ENCODE measurements at regions of chr14 and their contacts with region 1.

Region 1: GRCh38 chr14:69153131-69153872 is 383 bp upstream of the DCAF5 start:
- DNase-seq: peak; percentile 76 to 96 (median 91)
- ATAC-seq: peak; percentile 94
- H3K4me3 ChIP-seq: peak overlapping the region; percentile 83
- H3K4me3 Mint-ChIP-seq: peak overlapping the region; percentile 89 to 100 (median 97)
- H3K27ac ChIP-seq: peak overlapping the region; percentile 90
- H3K27ac Mint-ChIP-seq: peak overlapping the region; percentile 84 to 98 (median 93)
- H3K4me1 ChIP-seq: peaks cover 11 to 12% of the 10 kb centered on the region in 2 donors
- H3K4me1 Mint-ChIP-seq: peaks cover 30 to 37% (median 36%) of the 10 kb centered on the region in 7 donors
- H3K27me3 ChIP-seq: no peaks in the 10 kb centered on the region
- H3K27me3 Mint-ChIP-seq: peaks cover 0 to 36% (median 0%) of the 10 kb centered on the region in 5 donors

Region 2: DNA sequence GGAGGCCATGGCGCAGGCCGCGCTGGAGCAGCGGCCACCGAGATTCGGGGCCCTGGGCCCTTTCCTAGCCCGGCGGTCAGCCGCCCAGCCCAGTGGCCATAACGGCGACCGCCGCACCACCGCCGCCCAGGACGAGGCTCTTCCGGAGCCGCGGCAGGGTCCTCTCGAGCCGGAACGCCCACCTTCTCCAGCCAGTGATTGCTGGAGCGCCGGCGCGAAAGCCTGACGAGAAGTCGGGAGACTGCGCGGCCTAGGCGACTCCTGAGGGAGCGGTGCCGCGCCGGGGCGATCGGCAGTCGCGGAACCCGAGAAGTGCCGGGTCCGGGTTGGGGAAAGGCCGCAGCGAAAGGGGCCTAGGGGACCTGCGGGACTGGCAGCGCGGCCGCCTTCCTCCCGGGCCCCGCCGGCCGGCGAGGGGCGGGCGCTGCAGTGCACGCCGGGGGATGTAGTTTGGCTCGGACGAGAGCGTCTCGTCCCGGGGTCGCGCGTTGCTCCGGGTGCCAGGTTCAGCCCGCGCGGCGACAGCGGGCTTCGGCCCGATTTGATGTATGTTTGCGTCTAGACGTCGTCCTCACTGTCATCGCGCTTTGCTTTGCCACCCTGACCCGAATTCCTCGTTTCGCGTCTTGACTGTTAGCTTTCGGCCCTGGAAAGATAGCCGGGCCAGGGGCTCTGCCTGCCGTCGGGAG is 1478.7 kb before region 1 on chr14 and contains the start of gene VTI1B:
- CTCF ChIA-PET with region 1: no interaction called
- POLR2A ChIA-PET with region 1: no interaction called
- intact Hi-C with region 1: loop called in 1 of 2 experiments (anchors 1 kb)
- DNase-seq: peak; percentile 71 to 84 (median 80)
- ATAC-seq: peak; percentile 95
- H3K4me3 ChIP-seq: peak within 1 kb of the TSS; percentile 65
- H3K4me3 Mint-ChIP-seq: peak within 1 kb of the TSS; percentile 91 to 96 (median 93)
- H3K27ac ChIP-seq: peak within 1 kb of the TSS; percentile 95
- H3K27ac Mint-ChIP-seq: peak within 1 kb of the TSS; percentile 82 to 96 (median 92)
- H3K4me1 ChIP-seq: peaks cover 17 to 21% of the 10 kb centered on the region in 2 donors
- H3K4me1 Mint-ChIP-seq: peaks cover 22 to 62% (median 55%) of the 10 kb centered on the region in 7 donors
- H3K27me3 ChIP-seq: no peaks in the 10 kb centered on the region
- H3K27me3 Mint-ChIP-seq: no peaks in the 10 kb centered on the region
- total RNA-seq, gene VTI1B: 49.2 to 82.4 (median 65.9) TPM

Region 3: GRCh38 chr14:69129264-69129880 is 23.9 kb before region 1 on chr14:
- CTCF ChIA-PET with region 1: interaction called, 8 read pairs
- POLR2A ChIA-PET with region 1: interaction called, 6 read pairs
- intact Hi-C with region 1: loop called (anchors 1 to 2 kb)
- DNase-seq: peak; percentile 28 to 82 (median 72)
- ATAC-seq: peak; percentile 95
- H3K4me3 ChIP-seq: no peak overlapping the region
- H3K4me3 Mint-ChIP-seq: peak overlapping the region in 8 of 10 donors; percentile 2 to 37 (median 23)
- H3K27ac ChIP-seq: peak overlapping the region; percentile 27
- H3K27ac Mint-ChIP-seq: peak overlapping the region in 8 of 9 donors; percentile 44 to 91 (median 82)
- H3K4me1 ChIP-seq: peaks cover 16 to 33% of the 10 kb centered on the region in 2 donors
- H3K4me1 Mint-ChIP-seq: peaks cover 36 to 94% (median 90%) of the 10 kb centered on the region in 7 donors
- H3K27me3 ChIP-seq: no peaks in the 10 kb centered on the region
- H3K27me3 Mint-ChIP-seq: no peaks in the 10 kb centered on the region

Region 4: GRCh38 chr14:69242311-69243224 is 89.3 kb after region 1 on chr14:
- CTCF ChIA-PET with region 1: interaction called, 3 read pairs
- POLR2A ChIA-PET with region 1: interaction called, 6 read pairs
- intact Hi-C with region 1: loop called in 1 of 2 experiments (anchors 1 kb)
- DNase-seq: peak in 7 of 9 donors; percentile 23 to 61 (median 49)
- ATAC-seq: peak; percentile 78
- H3K4me3 ChIP-seq: no peak overlapping the region
- H3K4me3 Mint-ChIP-seq: no peak overlapping the region
- H3K27ac ChIP-seq: no peak overlapping the region
- H3K27ac Mint-ChIP-seq: peak overlapping the region in 1 of 9 donors; percentile 59
- H3K4me1 ChIP-seq: no peaks in the 10 kb centered on the region
- H3K4me1 Mint-ChIP-seq: peaks cover 0 to 4% (median 0%) of the 10 kb centered on the region in 7 donors
- H3K27me3 ChIP-seq: no peaks in the 10 kb centered on the region
- H3K27me3 Mint-ChIP-seq: no peaks in the 10 kb centered on the region

Region 5: DNA sequence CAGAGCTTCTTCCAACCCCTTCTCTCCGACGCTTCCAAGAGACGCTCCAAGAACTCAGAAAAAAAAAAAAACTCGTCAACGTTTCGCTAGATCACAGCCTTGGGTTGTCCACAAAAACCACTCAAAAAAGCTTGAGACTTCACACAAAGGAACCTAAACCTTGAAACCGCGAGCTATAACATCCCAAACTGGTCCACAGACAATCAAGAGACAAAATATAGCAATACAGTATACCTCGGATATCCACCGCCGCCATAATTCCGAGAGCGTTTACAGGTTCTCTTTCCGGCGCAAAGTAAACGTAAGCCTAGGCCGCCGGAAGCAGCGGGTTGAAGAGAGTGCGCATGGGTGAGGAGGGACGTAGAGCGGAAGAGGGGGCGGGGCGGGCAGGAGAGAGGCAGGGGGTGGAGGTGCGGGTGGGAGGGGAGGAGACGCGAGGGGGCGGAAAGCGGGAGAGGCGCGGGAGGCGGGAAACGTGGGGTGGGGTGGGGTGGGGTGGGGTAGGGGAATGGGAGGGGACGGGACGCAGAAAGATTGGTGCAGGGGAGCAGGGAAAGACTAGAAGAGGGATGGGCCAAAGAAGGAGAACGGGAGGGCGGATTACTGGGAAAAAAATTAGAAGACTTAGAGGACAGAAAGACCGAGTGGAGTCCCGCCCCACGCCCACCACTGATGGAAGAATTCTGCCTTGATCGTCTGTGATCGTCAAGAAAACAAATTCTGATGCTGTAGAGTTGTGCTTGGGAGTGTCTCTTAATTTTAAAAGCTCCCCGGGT is 1447.3 kb after region 1 on chr14 and contains the start of gene MED6:
- CTCF ChIA-PET with region 1: no interaction called
- POLR2A ChIA-PET with region 1: no interaction called
- intact Hi-C with region 1: loop called in 1 of 2 experiments (anchors 2 kb)
- DNase-seq: peak; percentile 78 to 94 (median 91)
- ATAC-seq: peak; percentile 100
- H3K4me3 ChIP-seq: peak within 1 kb of the TSS; percentile 96
- H3K4me3 Mint-ChIP-seq: peak within 1 kb of the TSS; percentile 97 to 100 (median 99)
- H3K27ac ChIP-seq: peak within 1 kb of the TSS; percentile 91
- H3K27ac Mint-ChIP-seq: peak within 1 kb of the TSS; percentile 96 to 99 (median 98)
- H3K4me1 ChIP-seq: peaks cover 11 to 14% of the 10 kb centered on the region in 2 donors
- H3K4me1 Mint-ChIP-seq: peaks cover 15 to 47% (median 40%) of the 10 kb centered on the region in 7 donors
- H3K27me3 ChIP-seq: no peaks in the 10 kb centered on the region
- H3K27me3 Mint-ChIP-seq: peaks cover 0 to 22% (median 6%) of the 10 kb centered on the region in 5 donors
- total RNA-seq, gene MED6: 53.4 to 97.0 (median 67.1) TPM

Region 6: GRCh38 chr14:70907176-70907995 is 1754.1 kb after region 1 on chr14 and contains the start of gene PCNX1:
- CTCF ChIA-PET with region 1: no interaction called
- POLR2A ChIA-PET with region 1: no interaction called
- intact Hi-C with region 1: no loop called
- DNase-seq: peak; percentile 91 to 95 (median 94)
- ATAC-seq: peak; percentile 87
- H3K4me3 ChIP-seq: peak within 1 kb of the TSS; percentile 93
- H3K4me3 Mint-ChIP-seq: peak within 1 kb of the TSS; percentile 87 to 99 (median 94)
- H3K27ac ChIP-seq: peak within 1 kb of the TSS; percentile 87
- H3K27ac Mint-ChIP-seq: peak within 1 kb of the TSS; percentile 93 to 99 (median 97)
- H3K4me1 ChIP-seq: peaks cover 9 to 34% of the 10 kb centered on the region in 2 donors
- H3K4me1 Mint-ChIP-seq: peaks cover 49 to 75% (median 70%) of the 10 kb centered on the region in 7 donors
- H3K27me3 ChIP-seq: no peaks in the 10 kb centered on the region
- H3K27me3 Mint-ChIP-seq: no peaks in the 10 kb centered on the region
- total RNA-seq, gene PCNX1: 80.8 to 114 (median 112) TPM